MCF 10A (cell line): ENCODE measurements at regions of chr5 and their contacts with region 1.

Region 1: GRCh38 chr5:141557681-141558136 is 61.1 kb downstream of the DIAPH1 start:
- DNase-seq: peak; percentile 99
- H3K4me3 Mint-ChIP-seq: peak overlapping the region; percentile 70
- H3K27ac Mint-ChIP-seq: peak overlapping the region; percentile 98
- H3K4me1 Mint-ChIP-seq: peaks cover 49% of the 10 kb centered on the region
- H3K27me3 Mint-ChIP-seq: no peaks in the 10 kb centered on the region
- CTCF ChIP-seq: peak; percentile 93

Region 2: GRCh38 chr5:140725799-140726471 is 831.8 kb before region 1 on chr5:
- CTCF ChIA-PET with region 1: interaction called, 3 read pairs
- POLR2A ChIA-PET with region 1: interaction called, 3 read pairs
- intact Hi-C with region 1: loop called (anchors 5 kb)
- DNase-seq: peak; percentile 99
- H3K4me3 Mint-ChIP-seq: peak overlapping the region; percentile 72
- H3K27ac Mint-ChIP-seq: peak overlapping the region; percentile 42
- H3K4me1 Mint-ChIP-seq: peaks cover 6% of the 10 kb centered on the region
- H3K27me3 Mint-ChIP-seq: no peaks in the 10 kb centered on the region
- CTCF ChIP-seq: no peak

Region 3: GRCh38 chr5:141192110-141192732 is 365.5 kb before region 1 on chr5 and contains the start of gene PCDHB10:
- CTCF ChIA-PET with region 1: interaction called, 26 read pairs
- POLR2A ChIA-PET with region 1: interaction called, 15 read pairs
- intact Hi-C with region 1: loop called (anchors 1 kb)
- DNase-seq: peak; percentile 60
- H3K4me3 Mint-ChIP-seq: peak within 1 kb of the TSS; percentile 81
- H3K27ac Mint-ChIP-seq: no peak within 1 kb of the TSS
- H3K4me1 Mint-ChIP-seq: peaks cover 6% of the 10 kb centered on the region
- H3K27me3 Mint-ChIP-seq: no peaks in the 10 kb centered on the region
- CTCF ChIP-seq: peak; percentile 76
- total RNA-seq, gene PCDHB10: 1.2 and 1.4 TPM in 2 replicates

Region 4: DNA sequence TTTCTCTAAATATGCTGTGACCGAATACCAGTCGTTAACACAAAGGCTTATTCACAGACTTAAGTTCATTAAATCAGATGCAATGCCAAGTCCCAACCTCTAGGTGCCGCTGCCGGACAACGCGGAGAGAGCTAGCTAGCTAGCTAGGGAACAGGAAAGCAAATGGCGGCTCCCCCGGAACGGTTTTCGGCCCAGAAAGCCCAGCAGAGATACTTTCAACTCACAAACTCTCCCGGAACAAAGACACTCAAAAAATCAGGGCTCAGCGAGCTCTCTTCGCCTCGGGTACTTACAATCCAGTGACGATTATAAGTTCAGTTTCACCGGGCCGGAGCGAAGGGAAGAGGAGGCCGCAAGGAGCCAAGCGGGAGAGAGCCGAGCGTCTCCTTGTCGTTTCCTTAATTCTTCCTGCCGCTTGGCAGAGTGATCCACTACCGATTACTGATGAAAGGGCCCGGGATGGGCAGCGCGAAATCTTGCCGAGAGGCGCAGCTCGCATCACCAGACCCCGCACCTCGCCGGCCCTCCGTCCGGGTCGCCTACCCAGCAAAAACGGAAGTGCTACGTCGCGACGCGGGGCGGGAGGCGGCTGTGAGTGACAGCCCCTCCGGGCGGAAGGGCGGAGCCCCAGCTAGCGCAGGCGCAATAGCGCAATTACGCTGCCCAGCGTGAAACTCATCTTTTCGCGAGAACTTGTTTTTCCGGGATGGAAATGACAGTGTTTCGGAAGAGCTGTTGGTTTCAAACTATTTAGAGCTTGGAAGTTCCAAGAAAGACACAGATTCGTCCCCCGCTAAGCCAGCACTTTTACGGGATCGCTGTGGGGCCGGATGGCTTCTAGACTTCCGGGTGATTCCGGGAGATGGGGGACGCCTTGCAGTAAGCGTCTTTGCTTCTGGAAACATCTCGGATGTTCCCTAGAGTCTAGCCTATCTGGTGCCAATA is 237.2 kb before region 1 on chr5 and contains the start of gene TAF7:
- CTCF ChIA-PET with region 1: interaction called, 51 read pairs
- POLR2A ChIA-PET with region 1: interaction called, 60 read pairs
- intact Hi-C with region 1: loop called (anchors 1 kb)
- DNase-seq: peak; percentile 95
- H3K4me3 Mint-ChIP-seq: peak within 1 kb of the TSS; percentile 99
- H3K27ac Mint-ChIP-seq: peak within 1 kb of the TSS; percentile 100
- H3K4me1 Mint-ChIP-seq: peaks cover 14% of the 10 kb centered on the region
- H3K27me3 Mint-ChIP-seq: no peaks in the 10 kb centered on the region
- CTCF ChIP-seq: peak; percentile 90
- total RNA-seq, gene TAF7: 81.3 and 94.9 TPM in 2 replicates

Region 5: GRCh38 chr5:141412854-141413539 is 144.7 kb before region 1 on chr5 and contains the start of gene PCDHGA10:
- CTCF ChIA-PET with region 1: interaction called, 38 read pairs
- POLR2A ChIA-PET with region 1: interaction called, 11 read pairs
- intact Hi-C with region 1: loop called (anchors 1 kb)
- DNase-seq: peak; percentile 83
- H3K4me3 Mint-ChIP-seq: peak within 1 kb of the TSS; percentile 54
- H3K27ac Mint-ChIP-seq: no peak within 1 kb of the TSS
- H3K4me1 Mint-ChIP-seq: no peaks in the 10 kb centered on the region
- H3K27me3 Mint-ChIP-seq: no peaks in the 10 kb centered on the region
- CTCF ChIP-seq: peak; percentile 67
- total RNA-seq, gene PCDHGA10: 1.4 TPM in 2 replicates

Region 6: DNA sequence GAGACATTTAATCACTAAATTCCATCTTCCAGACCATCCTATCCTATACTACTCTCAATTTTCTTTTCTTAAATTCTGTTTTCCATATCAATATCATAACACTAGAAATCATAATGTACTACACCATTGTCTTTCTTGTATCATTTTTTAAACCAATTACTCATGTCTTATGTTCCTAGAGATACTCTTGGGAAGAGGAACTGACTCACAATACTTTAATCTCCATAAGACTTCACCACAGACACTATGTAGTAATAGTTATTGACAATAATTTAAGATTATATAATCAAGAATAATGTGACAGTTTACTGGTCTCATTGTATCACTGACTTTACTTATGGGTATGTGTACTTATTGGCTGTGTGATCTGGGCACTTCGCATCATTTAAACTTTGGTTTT is 25.0 kb before region 1 on chr5:
- CTCF ChIA-PET with region 1: interaction called, 191 read pairs
- POLR2A ChIA-PET with region 1: interaction called, 167 read pairs
- intact Hi-C with region 1: no loop called
- DNase-seq: no peak
- H3K4me3 Mint-ChIP-seq: no peak overlapping the region
- H3K27ac Mint-ChIP-seq: no peak overlapping the region
- H3K4me1 Mint-ChIP-seq: peaks cover 12% of the 10 kb centered on the region
- H3K27me3 Mint-ChIP-seq: no peaks in the 10 kb centered on the region
- CTCF ChIP-seq: no peak

Region 7: DNA sequence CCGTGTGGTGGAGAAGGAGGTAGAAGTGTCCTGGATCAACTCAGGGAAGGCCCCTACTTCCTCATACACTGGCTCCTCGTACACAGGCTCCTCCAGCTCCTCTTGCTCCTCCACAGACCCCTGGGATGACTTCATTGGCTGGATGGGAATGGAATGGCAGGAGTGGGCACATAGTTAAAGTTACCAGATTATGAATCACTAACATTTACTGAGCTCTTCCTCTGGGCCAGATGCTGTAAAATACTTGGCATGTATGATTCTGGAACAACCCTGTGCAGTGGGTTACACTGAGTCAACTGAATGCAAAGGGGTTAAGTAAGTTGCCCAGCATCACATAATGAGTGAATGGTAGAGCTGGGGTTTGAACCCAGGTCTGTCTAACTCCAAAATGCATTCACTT is 96.6 kb after region 1 on chr5:
- CTCF ChIA-PET with region 1: no interaction called
- POLR2A ChIA-PET with region 1: no interaction called
- intact Hi-C with region 1: no loop called
- DNase-seq: no peak
- H3K4me3 Mint-ChIP-seq: no peak overlapping the region
- H3K27ac Mint-ChIP-seq: no peak overlapping the region
- H3K4me1 Mint-ChIP-seq: peaks cover 33% of the 10 kb centered on the region
- H3K27me3 Mint-ChIP-seq: no peaks in the 10 kb centered on the region
- CTCF ChIP-seq: no peak